Activated CD4-positive, alpha-beta memory T cell treated with anti-CD3 and anti-CD28 coated beads for 36 hours (primary cell): ENCODE measurements at regions of chr14 and their contacts with region 1.

Region 1: GRCh38 chr14:64723691-64724577 is 19.7 kb downstream of the PLEKHG3 start:
- DNase-seq: peak; percentile 70
- H3K4me3 Mint-ChIP-seq: no peak overlapping the region
- H3K27ac Mint-ChIP-seq: peak overlapping the region; percentile 78
- H3K4me1 Mint-ChIP-seq: peaks cover 94% of the 10 kb centered on the region
- H3K27me3 Mint-ChIP-seq: no peaks in the 10 kb centered on the region

Region 2: DNA sequence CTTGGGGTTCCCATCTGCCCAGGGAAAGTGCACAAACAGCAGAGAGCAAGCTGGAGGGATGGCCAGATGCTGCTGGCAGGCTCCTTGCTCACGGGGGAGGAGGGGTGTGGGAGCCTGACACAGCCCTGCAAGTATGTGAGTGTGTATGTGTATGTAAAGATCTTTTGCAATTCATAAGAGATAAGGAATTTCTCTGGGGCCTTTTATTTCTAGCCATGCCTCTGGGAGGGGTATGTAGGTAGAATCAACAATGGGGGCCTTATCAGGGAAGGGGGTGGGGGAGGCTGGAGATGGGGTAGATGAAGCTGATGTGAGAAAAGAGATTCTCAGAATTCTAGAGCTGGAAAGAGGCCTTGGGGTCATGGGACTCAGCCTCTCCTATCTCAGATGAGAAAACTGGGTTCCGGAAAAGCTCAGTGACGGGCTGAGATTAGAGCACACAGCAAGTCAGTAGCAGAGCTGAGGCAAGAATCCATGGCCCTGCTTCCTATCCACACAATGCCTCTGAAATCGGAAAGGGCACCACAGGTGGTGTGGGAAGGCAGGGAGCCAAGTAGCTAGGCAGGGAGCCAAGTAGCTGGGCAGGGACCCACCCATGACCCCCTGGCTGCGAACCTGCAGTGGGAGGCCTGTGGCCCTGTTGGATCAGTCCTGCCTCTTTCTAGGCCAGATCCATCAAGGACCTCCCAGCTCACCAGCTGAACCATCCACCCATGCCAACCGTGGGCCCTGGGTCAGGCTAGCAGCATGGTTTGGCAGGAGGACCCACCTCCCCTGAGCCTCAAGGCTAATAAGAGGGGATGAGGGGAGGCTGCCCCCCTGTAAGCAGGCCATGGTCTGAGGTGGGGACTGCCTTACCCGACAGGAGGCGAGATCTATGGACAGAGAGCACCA is 35.0 kb after region 1 on chr14:
- CTCF ChIA-PET with region 1: interaction called, 9 read pairs
- POLR2A ChIA-PET with region 1: interaction called, 4 read pairs
- intact Hi-C with region 1: loop called (anchors 1 kb)
- DNase-seq: no peak
- H3K4me3 Mint-ChIP-seq: no peak overlapping the region
- H3K27ac Mint-ChIP-seq: no peak overlapping the region
- H3K4me1 Mint-ChIP-seq: peaks cover 86% of the 10 kb centered on the region
- H3K27me3 Mint-ChIP-seq: no peaks in the 10 kb centered on the region